Common myeloid progenitor, CD34-positive (primary cell): ENCODE measurements at regions of chr4 and their contacts with region 1.

Region 1: DNA sequence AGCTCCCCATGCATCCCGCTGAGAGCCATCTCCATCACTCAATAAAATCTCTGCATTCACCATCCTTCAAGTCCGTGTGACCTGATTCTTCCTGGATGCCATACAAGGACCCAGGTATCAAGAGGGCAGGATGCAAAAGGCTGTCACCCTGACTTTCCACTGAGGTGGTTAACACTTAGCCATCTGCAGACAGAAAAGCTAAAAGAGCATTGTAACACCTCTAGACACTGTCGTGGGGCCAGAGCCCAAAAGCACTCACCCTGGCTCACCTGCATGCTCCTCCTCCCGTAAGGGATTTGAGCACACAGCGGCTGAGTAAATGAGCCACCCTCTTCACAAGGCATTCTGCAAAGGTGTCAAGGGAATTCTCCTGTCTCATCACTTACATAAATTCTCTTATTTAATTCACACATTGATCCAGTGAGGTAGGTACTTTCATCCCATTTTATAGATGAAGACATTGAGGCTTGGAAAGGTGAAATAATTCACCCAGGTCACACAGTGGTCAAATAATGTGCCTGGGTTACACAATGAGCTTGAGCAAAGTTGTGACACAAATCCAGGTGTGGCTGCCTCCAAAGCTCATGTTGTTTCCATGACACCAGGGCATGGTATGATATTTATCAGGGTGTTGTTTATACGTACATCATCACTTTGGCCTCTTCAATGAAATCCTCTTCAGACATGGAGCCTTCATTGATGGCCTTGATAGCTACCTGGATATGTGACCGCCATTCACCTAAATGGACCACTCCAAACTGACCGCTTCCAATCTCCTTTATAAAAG is 48.0 kb downstream of the TXK start:
- DNase-seq: no peak
- H3K4me3 ChIP-seq: no peak overlapping the region
- H3K27ac ChIP-seq: no peak overlapping the region
- H3K4me1 ChIP-seq: no peaks in the 10 kb centered on the region
- H3K27me3 ChIP-seq: no peaks in the 10 kb centered on the region

Region 2: DNA sequence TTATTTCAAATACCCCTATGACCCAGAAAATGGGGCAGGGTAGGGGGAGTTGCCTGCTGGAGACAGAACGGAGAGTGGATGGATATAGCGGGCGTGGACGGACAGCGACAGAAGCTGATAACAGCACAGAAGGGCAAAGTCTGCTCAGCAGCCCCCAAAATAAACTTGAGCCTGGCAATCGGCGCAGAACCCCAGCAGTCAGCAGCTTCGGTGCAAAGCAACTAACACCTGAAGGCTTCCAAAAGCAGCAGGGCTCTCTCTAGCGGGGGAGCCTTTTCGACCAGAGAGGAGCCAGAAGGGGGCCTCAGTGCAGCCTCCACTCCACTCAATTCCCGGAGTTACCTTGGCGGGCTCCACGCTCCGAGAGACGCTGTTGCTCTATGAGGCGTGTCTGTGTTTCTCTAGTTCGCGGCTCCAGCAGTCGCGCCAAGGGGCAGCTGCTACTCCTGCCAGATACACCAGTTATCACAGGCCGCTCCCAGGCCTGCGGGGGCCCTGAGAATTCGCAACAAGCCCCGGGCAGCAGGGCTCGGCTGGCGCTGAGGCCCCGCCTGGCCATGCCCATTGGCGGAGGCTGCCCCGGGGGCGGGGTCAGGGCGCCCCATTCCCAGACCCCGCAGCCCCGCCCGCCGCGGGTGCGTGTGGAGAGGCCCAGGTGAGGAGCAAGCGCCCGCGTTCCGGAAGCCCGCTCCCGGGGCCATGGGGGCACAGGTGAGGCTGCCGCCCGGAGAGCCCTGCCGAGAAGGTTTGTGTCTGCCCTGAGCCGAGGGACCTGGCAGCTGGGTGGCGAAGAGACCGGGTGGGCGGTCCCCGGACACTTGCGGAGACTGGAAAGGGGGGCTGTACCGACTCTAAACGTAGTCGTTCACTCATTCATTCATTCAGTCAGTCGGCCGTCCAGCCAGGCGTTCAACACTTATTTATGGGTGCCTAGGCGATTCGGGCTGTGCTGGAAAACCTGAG is 69.6 kb before region 1 on chr4 and contains the starts of genes CNGA1 and NIPAL1:
- CTCF ChIA-PET with region 1: interaction called, 10 read pairs
- POLR2A ChIA-PET with region 1: no interaction called
- DNase-seq: peak; percentile 56 to 69 (median 57)
- H3K4me3 ChIP-seq: peak within 1 kb of the TSS; percentile 47 to 80 (median 74)
- H3K27ac ChIP-seq: no peak within 1 kb of the TSS
- H3K4me1 ChIP-seq: peaks cover 0 to 23% (median 15%) of the 10 kb centered on the region in 4 experiments
- H3K27me3 ChIP-seq: peaks cover 6 to 37% (median 9%) of the 10 kb centered on the region in 5 experiments